Transverse colon (tissue), 4 donors: ENCODE measurements at regions of chr4 and their contacts with region 1.

Region 1: GRCh38 chr4:159298502-159298901 is 195.6 kb downstream of the RAPGEF2 start:
- DNase-seq: no peak
- H3K4me3 ChIP-seq: no peak overlapping the region
- H3K27ac ChIP-seq: no peak overlapping the region
- H3K4me1 ChIP-seq: peaks cover 0 to 6% (median 2%) of the 10 kb centered on the region in 4 donors
- H3K27me3 ChIP-seq: no peaks in the 10 kb centered on the region
- CTCF ChIP-seq: no peak
- EP300 ChIP-seq: no peak
- POLR2A ChIP-seq: no peak

Region 2: DNA sequence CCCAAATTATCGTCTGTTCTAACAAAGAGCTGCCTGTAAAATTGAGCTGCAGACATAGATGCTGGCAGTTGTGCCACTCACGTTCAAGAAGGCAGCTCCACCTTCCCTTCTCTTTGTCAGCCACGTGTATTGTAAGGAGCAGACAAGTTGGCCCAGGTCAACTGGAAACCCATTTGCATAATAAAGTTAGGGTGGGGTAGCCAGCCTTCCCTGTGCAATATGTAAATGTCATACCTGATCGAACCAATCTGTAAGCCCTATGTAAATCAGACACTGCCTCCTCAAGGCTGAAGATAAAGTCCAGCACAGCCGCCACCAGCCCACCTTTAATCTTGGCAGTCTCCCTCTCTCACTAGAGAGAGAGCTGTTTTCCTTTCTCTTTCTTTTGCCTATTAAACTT is 971.0 kb before region 1 on chr4:
- in situ Hi-C with region 1: no loop called
- intact Hi-C with region 1: no loop called
- DNase-seq: no peak
- H3K4me3 ChIP-seq: no peak overlapping the region
- H3K27ac ChIP-seq: no peak overlapping the region
- H3K4me1 ChIP-seq: no peaks in the 10 kb centered on the region
- H3K27me3 ChIP-seq: no peaks in the 10 kb centered on the region
- CTCF ChIP-seq: no peak
- EP300 ChIP-seq: no peak
- POLR2A ChIP-seq: no peak

Region 3: GRCh38 chr4:158610790-158611189 is 687.7 kb before region 1 on chr4:
- in situ Hi-C with region 1: no loop called
- intact Hi-C with region 1: no loop called
- DNase-seq: no peak
- H3K4me3 ChIP-seq: no peak overlapping the region
- H3K27ac ChIP-seq: no peak overlapping the region
- H3K4me1 ChIP-seq: peaks cover 0 to 4% (median 0%) of the 10 kb centered on the region in 4 donors
- H3K27me3 ChIP-seq: no peaks in the 10 kb centered on the region
- CTCF ChIP-seq: no peak
- EP300 ChIP-seq: no peak
- POLR2A ChIP-seq: no peak

Region 4: GRCh38 chr4:159126716-159127115 is 171.8 kb before region 1 on chr4:
- in situ Hi-C with region 1: no loop called
- intact Hi-C with region 1: no loop called
- DNase-seq: no peak
- H3K4me3 ChIP-seq: no peak overlapping the region
- H3K27ac ChIP-seq: peak overlapping the region in 2 of 4 donors; percentile 22 to 37
- H3K4me1 ChIP-seq: peaks cover 0 to 51% (median 14%) of the 10 kb centered on the region in 4 donors
- H3K27me3 ChIP-seq: no peaks in the 10 kb centered on the region
- CTCF ChIP-seq: no peak
- EP300 ChIP-seq: no peak
- POLR2A ChIP-seq: no peak

Region 5: DNA sequence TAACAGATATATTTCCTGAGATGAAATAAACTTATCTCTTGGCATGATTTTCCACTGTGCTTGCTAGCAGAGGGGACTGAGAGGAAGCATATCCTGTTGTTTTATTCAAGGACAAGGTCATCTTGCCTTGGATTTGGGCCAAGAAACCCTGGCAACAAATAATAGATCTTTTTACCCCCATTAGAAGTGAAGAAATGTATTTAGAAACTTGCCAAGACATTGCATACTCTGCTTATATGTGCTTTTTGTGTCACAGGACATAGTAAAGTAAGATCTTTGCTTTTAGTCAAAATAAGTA is 25.4 kb before region 1 on chr4:
- in situ Hi-C with region 1: no loop called
- intact Hi-C with region 1: no loop called
- DNase-seq: no peak
- H3K4me3 ChIP-seq: no peak overlapping the region
- H3K27ac ChIP-seq: no peak overlapping the region
- H3K4me1 ChIP-seq: peaks cover 0 to 31% (median 13%) of the 10 kb centered on the region in 4 donors
- H3K27me3 ChIP-seq: no peaks in the 10 kb centered on the region
- CTCF ChIP-seq: no peak
- EP300 ChIP-seq: no peak
- POLR2A ChIP-seq: no peak

Region 6: DNA sequence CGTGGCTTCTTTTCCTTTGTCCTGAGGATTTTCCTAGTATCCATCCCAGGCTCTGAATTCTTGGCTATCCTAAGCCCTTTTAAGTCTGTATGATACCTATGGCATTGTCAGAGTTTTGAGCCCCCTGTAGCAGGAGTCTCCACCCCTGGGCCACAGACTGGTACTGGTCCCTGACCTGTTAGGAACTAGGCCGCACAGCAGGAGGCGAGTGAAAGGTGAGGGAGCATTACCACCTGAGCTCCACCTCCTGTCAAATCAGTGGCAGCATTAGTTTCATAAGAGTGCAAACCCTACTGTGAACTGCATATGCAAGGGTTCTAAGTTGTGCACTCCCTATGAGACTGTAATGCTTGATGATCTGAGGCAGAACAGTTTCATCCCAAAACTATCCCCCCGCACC is 20.5 kb after region 1 on chr4:
- in situ Hi-C with region 1: no loop called
- intact Hi-C with region 1: loop called (anchors 1 kb)
- DNase-seq: no peak
- H3K4me3 ChIP-seq: no peak overlapping the region
- H3K27ac ChIP-seq: no peak overlapping the region
- H3K4me1 ChIP-seq: no peaks in the 10 kb centered on the region
- H3K27me3 ChIP-seq: no peaks in the 10 kb centered on the region
- CTCF ChIP-seq: no peak
- EP300 ChIP-seq: no peak
- POLR2A ChIP-seq: no peak